Right ventricle myocardium inferior (tissue), 1 donor: ENCODE measurements at regions of chr2 and their contacts with region 1.

Region 1: GRCh38 chr2:85741833-85742455 is 11.8 kb upstream of the ATOH8 start:
- DNase-seq: no peak
- ATAC-seq: peak; percentile 35

Region 2: DNA sequence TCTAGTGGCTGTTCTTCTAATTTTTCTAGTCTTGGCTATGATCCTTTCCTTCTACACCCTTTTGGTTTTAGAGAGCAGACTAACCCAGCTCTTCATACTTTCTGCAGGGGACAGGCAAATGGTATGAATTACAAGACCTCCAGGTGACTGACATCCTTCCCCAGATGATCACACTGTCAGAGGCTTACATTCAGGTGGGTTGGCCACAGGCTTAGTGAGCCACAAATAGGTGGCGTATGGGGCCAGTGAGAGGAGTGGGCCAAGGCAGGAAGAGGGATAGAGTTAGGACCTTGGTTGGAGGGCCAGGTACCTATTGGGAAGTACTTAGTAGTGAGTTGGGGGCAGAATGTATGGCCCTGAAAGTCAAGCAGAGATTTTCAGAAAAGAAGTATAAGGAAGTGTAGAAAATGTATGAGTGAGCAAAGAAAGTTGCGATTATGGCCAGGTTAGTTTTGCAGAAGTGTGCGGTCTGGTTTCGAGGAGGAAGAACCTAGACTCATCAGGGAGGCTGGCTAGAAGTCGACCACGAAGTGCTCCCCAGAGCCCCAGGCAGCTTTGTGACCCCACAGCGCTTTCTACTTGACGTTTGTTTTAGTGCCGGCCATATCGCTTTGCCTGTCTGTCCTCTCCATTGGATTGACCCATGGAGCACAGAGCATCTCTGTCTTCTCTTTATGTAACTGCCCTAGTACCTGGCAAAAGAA is 94.0 kb before region 1 on chr2:
- intact Hi-C with region 1: no loop called
- DNase-seq: no peak
- ATAC-seq: no peak

Region 3: DNA sequence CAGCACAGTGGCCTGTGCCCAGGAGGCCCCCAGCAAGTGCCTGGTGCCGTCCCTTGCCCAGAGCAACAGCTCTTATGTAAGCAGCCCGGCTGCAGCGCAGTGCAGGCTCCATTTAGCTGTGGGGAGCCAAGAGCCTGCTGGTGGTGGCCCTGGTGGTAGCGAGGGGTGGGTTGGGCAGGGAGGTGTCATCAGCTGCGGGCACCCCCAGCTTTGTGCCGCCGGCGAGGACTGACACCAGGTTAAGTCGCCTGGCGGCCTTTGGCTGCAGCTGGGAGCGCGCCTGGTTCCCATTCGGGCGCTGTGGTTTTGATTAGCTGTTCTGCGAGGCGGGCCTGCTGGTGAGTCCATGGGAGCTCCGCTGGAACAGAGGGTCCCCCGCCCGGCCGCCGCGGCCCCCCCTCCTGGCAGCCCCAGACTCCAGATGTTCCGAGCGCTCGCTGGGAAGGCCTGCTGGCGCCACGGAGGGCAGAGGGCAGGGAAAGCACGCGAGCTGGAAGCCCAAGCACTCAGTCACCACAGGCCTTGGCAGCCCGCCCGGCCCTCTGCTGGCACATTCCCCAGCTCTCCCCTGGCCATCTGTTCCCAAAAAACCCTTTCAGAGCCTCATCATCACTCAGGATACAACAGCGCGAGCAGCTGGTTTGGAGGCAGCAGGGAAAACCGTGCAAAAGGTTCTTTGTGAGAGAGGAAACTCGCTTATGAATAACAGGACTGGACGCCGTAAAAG is 30.2 kb after region 1 on chr2:
- intact Hi-C with region 1: loop called (anchors 1 kb)
- DNase-seq: peak; percentile 98
- ATAC-seq: peak; percentile 92